Activated naive CD8-positive, alpha-beta T cell treated with anti-CD3 and anti-CD28 coated beads, Interleukin-2, amount 10 ng/mL, durations not matched to agents 7 days and 5 days (primary cell): ENCODE measurements at regions of chr12 and their contacts with region 1.

Region 1: DNA sequence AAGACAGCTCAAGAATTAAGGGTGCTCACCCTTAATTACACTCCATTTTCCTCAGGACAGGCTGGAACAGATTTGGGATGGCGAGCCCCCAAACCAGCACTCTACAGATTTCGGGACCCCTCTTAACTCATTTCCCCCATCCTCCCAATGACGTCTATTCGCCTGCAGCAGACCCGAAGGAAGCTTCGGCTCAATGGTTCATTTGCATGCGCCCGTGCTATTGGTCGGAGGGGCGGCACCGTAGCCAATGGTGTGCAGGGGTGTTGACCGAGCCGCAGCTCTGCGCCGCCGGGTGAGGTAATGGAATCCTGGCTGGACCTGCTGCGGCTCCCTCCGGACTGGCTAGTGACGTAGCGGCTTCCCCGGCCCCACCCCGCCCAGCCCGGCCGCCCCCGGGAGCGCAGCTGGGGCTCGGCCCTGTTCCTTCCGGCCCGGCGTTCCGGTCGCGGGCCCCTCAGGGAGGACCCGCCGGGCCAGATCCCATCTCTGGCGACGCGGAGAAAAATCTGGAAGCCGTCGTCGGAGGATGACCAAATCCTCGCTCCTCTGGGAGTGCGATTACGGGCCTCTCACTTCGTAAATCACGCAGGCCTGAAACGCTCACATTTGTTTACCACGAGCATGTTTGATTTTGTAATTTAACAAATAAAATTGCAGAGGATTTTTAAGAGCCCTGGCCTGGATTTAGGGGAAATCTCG is 18.3 kb upstream of the NR4A1 start:
- DNase-seq: peak; percentile 88
- ATAC-seq: peak; percentile 93
- H3K4me3 Mint-ChIP-seq: peak overlapping the region; percentile 78
- H3K27ac Mint-ChIP-seq: peak overlapping the region; percentile 64
- H3K4me1 Mint-ChIP-seq: peaks cover 16% of the 10 kb centered on the region
- H3K27me3 Mint-ChIP-seq: peaks cover 7% of the 10 kb centered on the region

Region 2: DNA sequence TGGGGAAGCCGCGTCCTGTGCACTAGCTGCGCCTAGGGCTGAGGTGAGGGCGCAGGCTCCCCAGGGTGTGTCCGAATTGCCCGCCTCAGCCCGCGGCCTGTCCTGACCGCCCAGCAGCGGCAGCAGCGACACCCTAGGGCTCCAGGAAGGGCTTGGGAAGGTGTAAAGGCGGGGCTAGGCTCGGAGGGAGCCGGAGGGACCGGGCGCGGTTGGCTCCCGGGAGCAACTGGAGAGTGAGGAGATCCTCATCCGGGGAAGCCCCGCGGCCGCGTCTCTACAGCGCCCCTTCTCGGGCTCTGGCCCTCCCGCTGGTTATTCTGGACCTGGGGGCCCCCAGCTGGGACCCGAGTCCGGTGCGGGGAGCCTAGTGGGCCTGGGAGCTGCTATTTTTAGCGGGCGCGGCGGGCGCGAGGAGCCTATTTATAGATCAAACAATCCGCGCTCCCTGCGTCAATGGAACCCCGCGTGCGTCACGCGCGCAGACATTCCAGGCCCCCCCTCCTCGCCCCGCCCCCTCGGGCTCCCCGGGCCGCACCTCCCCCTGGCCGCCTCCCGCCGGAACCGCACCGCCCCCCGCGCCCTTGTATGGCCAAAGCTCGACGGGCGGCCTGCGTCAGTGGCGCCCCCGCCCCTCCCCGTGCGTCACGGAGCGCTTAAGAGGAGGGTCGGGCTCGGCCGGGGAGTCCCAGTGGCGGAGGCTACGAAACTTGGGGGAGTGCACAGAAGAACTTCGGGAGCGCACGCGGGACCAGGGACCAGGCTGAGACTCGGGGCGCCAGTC is 18.0 kb after region 1 on chr12 and contains the start of gene NR4A1:
- POLR2A ChIA-PET with region 1: interaction called, 28 read pairs
- DNase-seq: peak; percentile 100
- ATAC-seq: peak; percentile 80
- H3K4me3 Mint-ChIP-seq: peak within 1 kb of the TSS; percentile 99
- H3K27ac Mint-ChIP-seq: peak within 1 kb of the TSS; percentile 99
- H3K4me1 Mint-ChIP-seq: peaks cover 38% of the 10 kb centered on the region
- H3K27me3 Mint-ChIP-seq: peaks cover 2% of the 10 kb centered on the region
- total RNA-seq, gene NR4A1: 8.6 to 8.8 TPM

Region 3: GRCh38 chr12:52069327-52070184 is 36.6 kb after region 1 on chr12 and contains the start of gene ATG101:
- POLR2A ChIA-PET with region 1: interaction called, 13 read pairs
- DNase-seq: peak; percentile 91
- ATAC-seq: peak; percentile 94
- H3K4me3 Mint-ChIP-seq: peak within 1 kb of the TSS; percentile 94
- H3K27ac Mint-ChIP-seq: peak within 1 kb of the TSS; percentile 99
- H3K4me1 Mint-ChIP-seq: peaks cover 48% of the 10 kb centered on the region
- H3K27me3 Mint-ChIP-seq: peaks cover 3% of the 10 kb centered on the region
- total RNA-seq, gene ATG101: 25.2 to 28.8 TPM

Region 4: GRCh38 chr12:52121824-52122539 is 89.0 kb after region 1 on chr12:
- POLR2A ChIA-PET with region 1: no interaction called
- DNase-seq: peak; percentile 76
- ATAC-seq: peak; percentile 44
- H3K4me3 Mint-ChIP-seq: no peak overlapping the region
- H3K27ac Mint-ChIP-seq: no peak overlapping the region
- H3K4me1 Mint-ChIP-seq: peaks cover 21% of the 10 kb centered on the region
- H3K27me3 Mint-ChIP-seq: peaks cover 13% of the 10 kb centered on the region

Region 5: GRCh38 chr12:52390739-52391617 is 358.0 kb after region 1 on chr12:
- POLR2A ChIA-PET with region 1: no interaction called
- DNase-seq: no peak
- ATAC-seq: no peak
- H3K4me3 Mint-ChIP-seq: no peak overlapping the region
- H3K27ac Mint-ChIP-seq: no peak overlapping the region
- H3K4me1 Mint-ChIP-seq: no peaks in the 10 kb centered on the region
- H3K27me3 Mint-ChIP-seq: peaks cover 9% of the 10 kb centered on the region